Right ventricle myocardium inferior (tissue), 1 donor: ENCODE measurements at regions of chr10 and their contacts with region 1.

Region 1: GRCh38 chr10:77004917-77005564 is 632.6 kb downstream of the KCNMA1 start:
- DNase-seq: no peak
- ATAC-seq: peak; percentile 85

Region 2: DNA sequence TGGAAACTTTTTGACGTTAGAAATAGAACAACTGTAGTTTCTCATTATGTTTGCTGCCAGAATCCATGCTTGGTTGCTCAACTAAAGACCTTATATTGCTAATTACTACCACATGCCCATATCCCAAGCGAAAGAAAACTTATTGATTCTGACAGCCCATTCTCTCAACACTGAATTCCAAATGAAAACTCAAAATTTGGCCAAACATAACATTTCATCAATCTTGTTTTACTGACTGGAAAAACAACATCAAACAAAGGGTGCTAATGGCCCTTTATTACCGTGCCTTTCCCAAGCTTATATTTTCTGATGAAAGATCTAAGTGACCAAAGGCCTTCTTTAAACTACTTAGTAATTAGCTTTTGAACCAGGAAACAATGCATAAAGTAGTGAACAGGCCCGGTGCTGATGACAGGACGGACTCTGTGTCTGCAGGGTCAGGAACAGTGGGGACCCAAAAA is 100.8 kb after region 1 on chr10:
- intact Hi-C with region 1: loop called (anchors 5 kb)
- DNase-seq: no peak
- ATAC-seq: peak; percentile 63

Region 3: GRCh38 chr10:77121829-77122228 is 116.8 kb after region 1 on chr10:
- intact Hi-C with region 1: no loop called
- DNase-seq: no peak
- ATAC-seq: no peak